ENCODE measurements at regions of chr3 and their contacts with region 1.

Region 1: DNA sequence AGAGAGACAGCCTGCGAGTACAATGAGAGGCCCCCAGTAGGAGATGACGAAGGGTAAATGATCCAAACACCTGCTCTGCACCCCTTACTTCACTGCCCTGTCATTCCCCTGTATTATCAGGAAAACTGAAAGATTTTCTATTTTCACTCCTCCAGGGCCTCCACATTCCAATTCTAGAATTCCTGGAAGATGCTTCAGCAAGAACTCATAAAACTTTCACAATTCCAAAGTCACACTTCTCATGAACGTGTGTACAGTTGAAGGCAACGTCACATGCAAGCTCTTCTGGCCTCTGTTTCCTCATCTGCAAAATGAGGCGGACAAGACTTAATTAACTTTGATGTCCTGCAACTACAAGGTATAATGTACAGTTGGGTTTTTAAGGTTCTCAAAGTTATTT is 62.8 kb upstream of the SPATA12 start:
- DNase-seq: no peak
- ATAC-seq: peak in 1 of 2 donors; percentile 13
- H3K4me3 ChIP-seq: no peak overlapping the region
- H3K27ac ChIP-seq: no peak overlapping the region
- H3K4me1 ChIP-seq: peaks cover 2% of the 10 kb centered on the region
- H3K27me3 ChIP-seq: no peaks in the 10 kb centered on the region

Region 2: GRCh38 chr3:57078344-57078634 is 80.6 kb after region 1 on chr3:
- intact Hi-C with region 1: loop called in 3 of 4 experiments (anchors 5 to 10 kb)
- DNase-seq: peak in 2 of 3 donors; percentile 61 to 77
- ATAC-seq: peak in 1 of 2 donors; percentile 64
- H3K4me3 ChIP-seq: peak overlapping the region; percentile 61
- H3K27ac ChIP-seq: no peak overlapping the region
- H3K4me1 ChIP-seq: no peaks in the 10 kb centered on the region
- H3K27me3 ChIP-seq: no peaks in the 10 kb centered on the region

Region 3: GRCh38 chr3:57086201-57086600 is 88.5 kb after region 1 on chr3:
- intact Hi-C with region 1: loop called in 1 of 4 experiments (anchors 10 kb)
- DNase-seq: no peak
- ATAC-seq: no peak
- H3K4me3 ChIP-seq: no peak overlapping the region
- H3K27ac ChIP-seq: no peak overlapping the region
- H3K4me1 ChIP-seq: no peaks in the 10 kb centered on the region
- H3K27me3 ChIP-seq: no peaks in the 10 kb centered on the region

Region 4: GRCh38 chr3:57221883-57222282 is 224.2 kb after region 1 on chr3:
- intact Hi-C with region 1: loop called in 2 of 4 experiments (anchors 10 kb)
- DNase-seq: no peak
- ATAC-seq: no peak
- H3K4me3 ChIP-seq: no peak overlapping the region
- H3K27ac ChIP-seq: no peak overlapping the region
- H3K4me1 ChIP-seq: no peaks in the 10 kb centered on the region
- H3K27me3 ChIP-seq: no peaks in the 10 kb centered on the region

Region 5: GRCh38 chr3:57227204-57227929 is 229.7 kb after region 1 on chr3 and contains the start of gene APPL1:
- intact Hi-C with region 1: loop called in 1 of 4 experiments (anchors 10 kb)
- DNase-seq: peak; percentile 94 to 98 (median 97)
- ATAC-seq: peak; percentile 99
- H3K4me3 ChIP-seq: peak within 1 kb of the TSS; percentile 73
- H3K27ac ChIP-seq: peak within 1 kb of the TSS; percentile 97
- H3K4me1 ChIP-seq: no peaks in the 10 kb centered on the region
- H3K27me3 ChIP-seq: no peaks in the 10 kb centered on the region
- total RNA-seq, gene APPL1: 33.7 to 39.5 (median 38.1) TPM

Region 6: DNA sequence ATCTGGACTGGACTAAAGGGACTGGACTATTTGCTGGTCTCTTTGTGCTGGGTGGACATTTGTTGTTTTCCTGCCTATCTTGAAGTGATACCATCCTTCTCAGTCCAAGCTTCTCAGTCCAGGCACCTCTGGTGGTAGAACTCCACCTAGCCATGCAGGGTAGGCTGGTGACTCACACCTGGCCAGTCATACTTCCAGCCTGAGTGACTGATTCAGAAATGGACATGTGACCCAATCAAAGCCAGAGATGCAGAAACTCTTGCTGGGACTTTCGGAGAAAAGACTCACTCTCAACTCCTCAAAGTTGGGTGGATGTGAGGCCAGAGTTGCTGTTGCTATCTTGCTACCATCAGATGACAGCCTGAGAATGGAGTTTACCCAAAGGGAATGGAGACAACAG is 300.4 kb after region 1 on chr3:
- intact Hi-C with region 1: no loop called
- DNase-seq: no peak
- ATAC-seq: no peak
- H3K4me3 ChIP-seq: no peak overlapping the region
- H3K27ac ChIP-seq: no peak overlapping the region
- H3K4me1 ChIP-seq: no peaks in the 10 kb centered on the region
- H3K27me3 ChIP-seq: no peaks in the 10 kb centered on the region

Measured in right cardiac atrium (tissue), 5 donors.